ENCODE measurements at regions of chr11 and their contacts with region 1.

Region 1: DNA sequence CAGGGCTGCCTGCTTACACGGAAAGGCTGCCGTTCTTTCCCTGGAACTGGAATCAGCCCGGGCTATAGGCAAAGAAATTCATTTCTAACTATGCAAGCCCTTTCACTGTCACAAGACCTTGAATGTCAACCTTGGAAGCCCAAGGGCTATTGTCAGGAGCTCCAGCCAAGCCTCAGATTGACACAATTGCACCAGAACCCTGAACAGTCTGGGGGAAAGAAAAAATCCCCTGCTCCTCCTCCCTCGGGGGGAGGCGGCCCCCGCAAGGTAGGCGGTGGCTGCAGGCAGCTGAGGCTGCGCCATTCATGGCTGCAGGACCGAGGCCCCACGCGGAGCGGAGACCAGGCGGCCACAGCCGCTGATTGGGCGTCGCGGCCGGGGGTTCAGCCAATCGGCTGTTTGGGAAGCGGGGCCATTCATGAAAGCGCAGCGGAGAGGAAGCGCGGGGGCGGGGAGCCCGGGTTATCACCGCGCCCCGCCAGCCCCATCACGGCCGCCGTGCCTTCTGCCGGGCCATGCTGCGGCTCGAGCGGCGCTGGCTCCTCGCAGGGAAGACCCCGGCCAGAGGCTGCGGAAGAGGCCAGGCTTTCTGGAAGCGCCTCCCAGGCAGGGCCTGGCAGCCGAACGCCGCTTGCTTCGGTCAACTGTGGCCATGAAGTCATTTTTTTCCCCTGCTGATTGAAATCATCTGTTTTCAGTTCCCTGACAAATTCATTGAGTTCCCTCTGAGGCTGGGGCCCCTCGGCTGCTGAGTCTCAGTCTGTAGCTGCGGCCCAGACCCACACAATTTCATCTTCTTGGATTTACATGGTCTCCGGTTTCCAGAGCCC is 38.1 kb upstream of the LINC01488 start:
- DNase-seq: peak; percentile 99
- H3K4me3 ChIP-seq: peak overlapping the region; percentile 36
- H3K4me3 Mint-ChIP-seq: peak overlapping the region; percentile 57
- H3K27ac Mint-ChIP-seq: peak overlapping the region; percentile 88
- H3K4me1 ChIP-seq: peaks cover 48% of the 10 kb centered on the region
- H3K4me1 Mint-ChIP-seq: peaks cover 51% of the 10 kb centered on the region
- H3K27me3 ChIP-seq: no peaks in the 10 kb centered on the region
- H3K27me3 Mint-ChIP-seq: no peaks in the 10 kb centered on the region
- CTCF ChIP-seq: no peak

Region 2: DNA sequence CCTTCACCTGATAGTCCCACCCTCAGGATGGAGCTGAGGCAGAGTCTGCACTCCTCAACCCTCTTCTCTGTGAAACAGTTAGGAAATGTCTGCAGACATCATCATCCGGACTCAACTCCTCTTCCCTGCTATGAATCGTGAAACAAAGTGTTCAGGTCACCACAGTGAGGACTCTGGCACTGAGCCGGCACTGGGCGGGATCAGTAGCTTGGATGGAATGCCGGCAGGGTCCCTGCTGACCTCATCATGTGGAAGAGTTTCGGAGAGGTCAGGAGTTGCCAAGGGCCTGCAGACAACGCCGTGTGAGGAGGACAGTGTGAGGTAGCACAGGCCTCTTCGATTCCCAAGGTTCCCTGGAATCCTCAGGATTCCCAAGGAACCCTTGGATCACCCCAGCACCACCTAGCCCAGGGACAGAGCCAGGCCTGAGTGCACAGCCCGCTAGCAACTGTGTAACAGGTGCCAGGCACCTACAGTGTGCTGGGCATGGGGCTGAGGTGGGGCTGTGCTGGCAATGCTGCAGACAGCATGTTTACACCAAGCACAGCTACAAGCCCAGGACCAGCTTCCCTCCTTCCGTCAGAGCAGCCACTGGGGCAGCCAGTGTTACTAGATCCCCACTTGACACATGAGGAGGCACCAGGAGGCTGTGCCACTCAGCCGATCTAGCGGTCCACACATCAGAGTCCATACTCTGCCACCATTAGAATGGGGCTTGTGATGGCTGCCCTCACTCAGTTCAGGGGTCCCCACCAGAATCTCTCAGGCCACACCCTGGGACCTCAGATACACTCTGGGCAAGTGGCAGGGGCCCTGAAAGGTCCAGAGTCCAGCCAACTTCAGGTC is 37.4 kb after region 1 on chr11:
- CTCF ChIA-PET with region 1: interaction called, 3 read pairs
- POLR2A ChIA-PET with region 1: interaction called, 5 read pairs
- intact Hi-C with region 1: loop called (anchors 1 kb)
- DNase-seq: no peak
- H3K4me3 ChIP-seq: no peak overlapping the region
- H3K4me3 Mint-ChIP-seq: peak overlapping the region; percentile 80
- H3K27ac Mint-ChIP-seq: peak overlapping the region; percentile 95
- H3K4me1 ChIP-seq: peaks cover 45% of the 10 kb centered on the region
- H3K4me1 Mint-ChIP-seq: peaks cover 17% of the 10 kb centered on the region
- H3K27me3 ChIP-seq: no peaks in the 10 kb centered on the region
- H3K27me3 Mint-ChIP-seq: no peaks in the 10 kb centered on the region
- CTCF ChIP-seq: no peak

Measured in Caco-2 (cell line).